Ovary (tissue), 10 donors: ENCODE measurements at regions of chr19 and their contacts with region 1.

Region 1: DNA sequence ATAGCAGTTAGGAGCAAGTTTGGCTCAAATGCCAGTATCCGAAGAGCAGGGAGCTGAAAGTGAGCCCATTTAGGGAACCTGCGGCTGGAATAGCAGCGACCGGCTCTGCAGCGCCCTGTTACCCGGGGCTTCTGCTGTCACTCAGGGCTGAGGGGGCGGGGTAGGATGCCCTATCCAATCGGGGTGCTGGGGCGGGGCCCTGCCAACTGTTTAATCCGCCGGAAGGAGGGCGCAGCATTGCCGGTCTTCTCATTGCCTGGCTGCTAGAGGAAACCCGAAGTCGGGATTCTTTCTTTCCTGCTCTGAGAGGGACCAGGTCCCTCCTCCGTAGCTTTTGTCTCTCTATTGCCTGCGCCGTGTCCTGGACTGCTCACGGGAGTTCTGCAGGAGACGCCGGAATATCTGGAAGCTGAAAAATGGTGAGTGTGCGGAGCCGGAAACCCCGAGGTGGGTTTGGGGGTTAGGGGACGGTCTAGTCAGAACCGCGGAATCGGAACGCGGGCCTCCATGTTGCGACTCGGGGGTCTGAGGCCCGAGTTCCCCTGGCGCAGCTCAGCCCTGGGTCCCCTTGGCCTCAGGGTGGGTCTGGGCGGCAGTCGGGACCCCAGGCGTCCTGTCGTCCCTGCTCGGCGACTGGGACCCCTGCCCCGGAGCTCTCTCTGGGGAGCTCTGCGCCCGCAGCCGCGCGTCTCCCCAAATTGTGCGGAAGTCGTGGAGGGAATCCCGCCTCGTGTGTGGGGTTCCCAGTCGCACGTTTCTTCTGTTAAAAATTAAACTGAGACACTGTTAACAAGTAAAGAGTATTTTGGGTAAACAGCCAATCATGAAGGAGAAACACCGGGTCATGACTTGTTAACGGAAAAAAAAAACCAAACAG is 22.8 kb downstream of the ZNF763 start:
- DNase-seq: peak; percentile 92 to 95 (median 94)
- H3K4me3 ChIP-seq: peak overlapping the region; percentile 54
- H3K27ac ChIP-seq: peak overlapping the region; percentile 39 to 58
- H3K4me1 ChIP-seq: no peaks in the 10 kb centered on the region
- H3K27me3 ChIP-seq: no peaks in the 10 kb centered on the region
- CTCF ChIP-seq: no peak
- EP300 ChIP-seq: no peak
- POLR2A ChIP-seq: peak; percentile 52

Region 2: DNA sequence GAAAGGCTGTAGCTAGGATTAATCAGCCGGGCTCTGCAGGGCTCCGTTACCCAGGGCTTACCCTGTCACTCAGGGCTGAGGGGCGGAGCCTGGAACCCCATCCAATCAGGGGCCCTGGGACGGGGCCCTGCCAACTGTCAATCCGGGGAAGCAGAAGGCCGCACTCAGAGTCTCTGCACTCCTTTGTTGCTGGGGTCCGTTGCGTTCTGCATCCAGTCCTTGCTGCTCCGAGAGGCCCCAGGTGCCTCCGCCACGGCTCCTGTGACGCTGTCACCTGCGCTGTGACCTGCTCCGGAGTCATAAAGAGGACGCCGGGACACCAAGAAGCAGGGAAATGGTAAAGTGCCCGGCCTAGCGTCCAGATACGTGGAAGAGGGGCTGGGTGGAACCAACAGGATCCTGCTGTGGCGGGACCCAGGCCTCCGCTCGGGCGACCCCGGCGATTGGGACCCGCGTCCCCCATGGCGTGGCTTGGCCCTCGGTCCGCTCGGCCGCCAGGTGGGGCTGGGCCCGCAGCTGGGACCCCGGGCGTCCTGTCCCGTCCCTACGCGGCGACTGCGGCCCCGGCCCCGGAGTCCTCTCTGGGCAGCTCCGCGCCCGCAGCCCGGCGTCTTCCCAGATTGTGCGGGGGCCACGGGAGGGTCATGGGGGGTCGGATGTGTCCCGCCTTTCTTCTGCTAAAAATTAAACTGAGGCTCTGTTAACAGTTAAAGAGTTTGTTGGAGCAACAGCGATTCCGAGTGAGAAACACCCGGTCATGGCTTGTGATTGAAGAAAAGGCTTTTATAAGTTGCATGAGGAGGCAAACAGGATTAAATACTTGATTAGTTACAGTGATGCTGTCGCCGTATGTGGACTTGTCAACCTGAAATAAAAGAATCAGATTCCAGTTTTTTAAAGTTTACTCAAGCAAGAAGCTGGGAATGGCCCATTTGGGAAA is 189.0 kb before region 1 on chr19 and contains the start of gene ZNF491:
- intact Hi-C with region 1: loop called in 2 of 4 experiments (anchors 10 kb)
- DNase-seq: peak; percentile 86 to 92 (median 92)
- H3K4me3 ChIP-seq: peak within 1 kb of the TSS; percentile 58
- H3K27ac ChIP-seq: peak within 1 kb of the TSS; percentile 54 to 56
- H3K4me1 ChIP-seq: peaks cover 7% of the 10 kb centered on the region
- H3K27me3 ChIP-seq: no peaks in the 10 kb centered on the region
- CTCF ChIP-seq: peak in 1 of 3 donors; percentile 12
- EP300 ChIP-seq: no peak
- POLR2A ChIP-seq: no peak
- total RNA-seq, gene ZNF491: 2.2 to 6.5 (median 4.5) TPM

Region 3: GRCh38 chr19:11881151-11881800 is 106.4 kb before region 1 on chr19:
- intact Hi-C with region 1: loop called in 2 of 4 experiments (anchors 5 kb)
- DNase-seq: peak; percentile 56 to 76 (median 63)
- H3K4me3 ChIP-seq: no peak overlapping the region
- H3K27ac ChIP-seq: no peak overlapping the region
- H3K4me1 ChIP-seq: no peaks in the 10 kb centered on the region
- H3K27me3 ChIP-seq: no peaks in the 10 kb centered on the region
- CTCF ChIP-seq: peak; percentile 70 to 79 (median 76)
- EP300 ChIP-seq: no peak
- POLR2A ChIP-seq: no peak

Region 4: DNA sequence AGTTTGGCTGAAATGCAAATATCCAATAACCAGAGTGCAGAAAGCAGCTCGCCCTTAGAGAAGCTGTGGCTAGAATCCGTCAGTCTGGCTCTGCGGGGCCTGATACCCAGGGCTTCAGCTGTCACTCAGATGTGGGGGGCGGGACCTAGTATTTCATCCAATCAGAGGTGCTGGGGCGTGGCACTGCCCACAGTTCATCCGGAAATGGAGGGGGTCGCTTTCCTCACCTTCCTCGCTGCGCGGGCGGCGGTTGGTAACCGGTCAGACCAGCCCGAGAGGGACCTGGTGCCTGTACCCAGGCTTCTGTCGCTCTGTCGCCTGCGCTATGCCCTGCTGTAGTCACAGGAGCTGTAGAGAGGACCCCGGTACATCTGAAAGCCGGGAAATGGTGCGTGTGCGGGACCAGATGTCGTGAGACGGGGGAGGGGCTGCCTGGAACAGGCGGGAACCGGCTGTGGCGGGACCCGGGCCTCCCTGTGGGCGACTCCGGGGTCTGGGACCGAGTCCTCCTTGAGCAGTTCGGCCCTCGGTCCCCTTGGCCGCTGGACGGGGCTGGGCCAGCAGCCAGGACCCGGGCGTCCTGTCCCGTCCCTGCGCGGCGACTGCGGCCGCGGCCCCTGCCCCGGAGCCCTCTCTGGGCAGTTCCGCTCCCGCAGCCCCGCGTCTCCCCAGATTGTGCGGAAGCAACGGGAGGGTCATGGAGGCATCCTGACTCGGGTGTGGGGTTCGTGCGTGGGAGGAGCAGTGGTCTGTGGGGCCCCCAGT is 62.6 kb before region 1 on chr19 and contains the start of gene ZNF700:
- intact Hi-C with region 1: loop called in 3 of 4 experiments (anchors 2 to 10 kb)
- DNase-seq: peak; percentile 93 to 97 (median 95)
- H3K4me3 ChIP-seq: peak within 1 kb of the TSS; percentile 85
- H3K27ac ChIP-seq: peak within 1 kb of the TSS; percentile 38 to 91
- H3K4me1 ChIP-seq: peaks cover 15% of the 10 kb centered on the region
- H3K27me3 ChIP-seq: no peaks in the 10 kb centered on the region
- CTCF ChIP-seq: peak in 1 of 3 donors; percentile 20
- EP300 ChIP-seq: peak; percentile 74
- POLR2A ChIP-seq: peak; percentile 76
- total RNA-seq, gene ZNF700: 8.6 to 22.3 (median 14.0) TPM

Region 5: DNA sequence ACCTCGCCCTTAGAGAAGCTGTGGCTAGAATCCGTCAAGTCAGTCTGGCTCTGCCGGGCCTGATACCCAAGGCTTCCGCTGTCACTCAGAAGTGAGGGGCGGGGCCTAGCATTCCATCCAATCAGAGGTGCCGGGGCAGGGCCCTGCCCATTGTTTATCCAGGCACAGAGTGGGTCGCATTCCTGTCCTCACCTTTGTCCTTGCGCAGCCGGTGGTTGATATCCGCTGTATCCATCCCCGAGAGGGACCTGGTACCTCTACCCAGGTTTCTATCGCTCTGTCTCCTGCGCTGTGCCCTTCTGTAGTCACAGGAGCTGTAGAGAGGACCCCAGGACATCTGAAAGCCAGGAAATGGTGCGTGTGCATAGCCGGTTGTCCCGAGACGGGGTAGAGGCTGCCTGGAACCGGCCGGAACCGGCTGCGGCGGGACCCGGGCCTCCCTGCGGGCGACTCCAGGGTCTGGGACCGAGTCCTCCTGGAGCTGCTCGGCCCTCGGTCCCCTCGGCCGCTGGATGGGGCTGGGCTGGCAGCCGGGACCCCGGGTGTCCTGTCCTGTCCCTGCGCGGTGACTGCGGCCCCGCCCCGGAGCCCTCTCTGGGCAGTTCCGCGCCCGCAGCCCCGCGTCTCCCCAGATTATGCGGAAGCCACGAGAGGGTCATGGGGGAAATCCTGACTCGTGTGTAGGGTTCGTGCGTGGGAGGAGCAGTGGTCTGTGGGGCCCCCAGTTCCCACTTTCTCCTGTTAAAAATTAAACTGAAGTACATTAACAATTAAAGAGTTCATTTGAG is 22.6 kb before region 1 on chr19 and contains the start of gene ZNF763:
- intact Hi-C with region 1: loop called in 1 of 4 experiments (anchors 2 kb)
- DNase-seq: peak; percentile 92 to 96 (median 94)
- H3K4me3 ChIP-seq: peak within 1 kb of the TSS; percentile 65
- H3K27ac ChIP-seq: peak within 1 kb of the TSS; percentile 94 to 96
- H3K4me1 ChIP-seq: peaks cover 12% of the 10 kb centered on the region
- H3K27me3 ChIP-seq: no peaks in the 10 kb centered on the region
- CTCF ChIP-seq: no peak
- EP300 ChIP-seq: peak; percentile 21
- POLR2A ChIP-seq: peak; percentile 77
- total RNA-seq, gene ZNF763: 4.1 to 18.8 (median 8.3) TPM

Region 6: DNA sequence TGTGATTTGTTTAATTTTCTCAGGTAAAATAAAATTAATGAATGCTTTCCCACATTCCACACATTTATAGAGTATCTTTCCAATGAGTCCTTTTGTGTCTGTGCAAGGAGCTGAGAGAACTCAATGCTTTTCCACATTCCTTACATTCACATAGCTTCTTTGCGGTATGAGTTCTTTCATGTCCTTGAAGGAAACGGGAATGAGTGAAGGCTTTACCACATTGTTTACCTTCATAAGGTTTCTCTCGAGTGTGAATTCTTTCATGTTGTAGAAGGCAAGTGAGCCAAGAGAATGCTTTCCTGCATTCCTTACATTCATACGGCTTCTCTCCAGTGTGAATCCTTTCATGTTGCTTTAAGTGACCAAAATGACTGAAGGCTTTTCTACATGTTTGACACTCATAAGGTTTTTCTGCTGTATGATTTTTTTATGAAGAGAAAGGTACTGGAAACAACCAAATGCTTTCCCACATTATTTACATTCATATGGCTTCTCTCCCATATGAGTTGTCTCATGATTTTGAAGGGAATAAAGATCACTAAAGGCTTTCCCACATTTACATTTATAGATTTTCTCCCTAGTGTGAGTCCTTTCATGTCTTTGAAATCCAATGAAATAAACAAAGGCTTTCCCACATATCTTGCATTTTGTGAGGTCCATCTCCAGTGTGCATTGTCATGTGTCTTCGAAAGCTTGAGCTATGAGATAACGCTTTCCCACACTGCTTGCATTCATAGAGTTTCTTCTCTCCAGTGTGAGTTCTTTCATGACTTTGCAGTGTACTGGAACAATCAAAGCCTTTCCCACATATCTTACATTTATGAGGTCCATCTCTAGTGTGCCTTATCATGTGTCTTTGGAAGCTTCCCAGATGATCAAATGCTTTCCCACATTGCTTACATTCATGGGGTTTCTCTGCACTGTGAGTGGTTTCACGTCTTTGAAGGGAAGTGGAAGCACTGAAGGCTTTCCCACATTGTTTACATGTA is 392.4 kb after region 1 on chr19:
- intact Hi-C with region 1: no loop called
- DNase-seq: no peak
- H3K4me3 ChIP-seq: no peak overlapping the region
- H3K27ac ChIP-seq: no peak overlapping the region
- H3K4me1 ChIP-seq: no peaks in the 10 kb centered on the region
- H3K27me3 ChIP-seq: no peaks in the 10 kb centered on the region
- CTCF ChIP-seq: no peak
- EP300 ChIP-seq: no peak
- POLR2A ChIP-seq: no peak